HepG2 (cell line): ENCODE measurements at regions of chr21 and their contacts with region 1.

Region 1: GRCh38 chr21:46581780-46582307 is 23.0 kb downstream of the S100B start:
- DNase-seq: peak; percentile 79
- ATAC-seq: peak; percentile 97
- H3K4me3 ChIP-seq: peak overlapping the region in 1 of 3 experiments; percentile 43; a peak in 1 of 6 replicates
- H3K27ac ChIP-seq: peak overlapping the region; percentile 74
- H3K4me1 ChIP-seq: peaks cover 22% of the 10 kb centered on the region
- H3K27me3 ChIP-seq: no peaks in the 10 kb centered on the region
- CTCF ChIP-seq: no peak
- EP300 ChIP-seq: no peak
- POLR2A ChIP-seq: no peak
- RAD21 ChIP-seq: peak; percentile 27; the same call in 1 of the 2 replicates

Region 2: GRCh38 chr21:46442938-46443337 is 138.9 kb before region 1 on chr21:
- CTCF ChIA-PET with region 1: no interaction called
- POLR2A ChIA-PET with region 1: no interaction called
- in situ Hi-C with region 1: no loop called
- intact Hi-C with region 1: no loop called
- DNase-seq: no peak
- ATAC-seq: no peak
- H3K4me3 ChIP-seq: no peak overlapping the region
- H3K27ac ChIP-seq: no peak overlapping the region
- H3K4me1 ChIP-seq: peaks cover 11% of the 10 kb centered on the region
- H3K27me3 ChIP-seq: no peaks in the 10 kb centered on the region
- CTCF ChIP-seq: no peak
- EP300 ChIP-seq: no peak
- POLR2A ChIP-seq: no peak
- RAD21 ChIP-seq: no peak

Region 3: GRCh38 chr21:46569081-46569480 is 12.8 kb before region 1 on chr21:
- CTCF ChIA-PET with region 1: no interaction called
- POLR2A ChIA-PET with region 1: no interaction called
- in situ Hi-C with region 1: no loop called
- intact Hi-C with region 1: no loop called
- DNase-seq: no peak
- ATAC-seq: no peak
- H3K4me3 ChIP-seq: no peak overlapping the region
- H3K27ac ChIP-seq: no peak overlapping the region
- H3K4me1 ChIP-seq: no peaks in the 10 kb centered on the region
- H3K27me3 ChIP-seq: no peaks in the 10 kb centered on the region
- CTCF ChIP-seq: no peak
- EP300 ChIP-seq: no peak
- POLR2A ChIP-seq: no peak
- RAD21 ChIP-seq: no peak

Region 4: DNA sequence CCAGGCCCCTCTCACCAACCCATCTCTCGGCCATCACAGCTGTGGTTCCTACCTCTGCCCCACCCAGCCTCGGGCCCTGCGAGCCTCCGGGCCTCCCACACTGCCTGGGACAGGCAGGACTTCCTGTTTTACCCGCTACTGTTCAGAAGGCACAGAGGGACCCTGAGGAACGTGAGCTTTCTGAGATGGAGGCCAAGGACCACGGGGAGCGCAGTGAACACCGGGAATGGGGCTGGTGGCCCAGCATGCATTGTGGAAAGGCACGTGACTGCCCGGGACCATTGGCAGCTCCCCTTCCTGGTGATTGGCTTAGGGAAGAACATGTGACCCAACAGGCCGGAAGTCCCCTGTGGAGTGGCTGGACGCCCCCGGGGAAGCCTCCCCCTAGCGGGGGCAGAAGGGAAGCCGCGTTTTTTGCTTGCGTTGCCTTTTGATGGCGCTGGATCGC is 16.1 kb after region 1 on chr21:
- CTCF ChIA-PET with region 1: no interaction called
- POLR2A ChIA-PET with region 1: interaction called, 5 read pairs
- in situ Hi-C with region 1: no loop called
- intact Hi-C with region 1: loop called (anchors 2 kb)
- DNase-seq: no peak
- ATAC-seq: no peak
- H3K4me3 ChIP-seq: no peak overlapping the region
- H3K27ac ChIP-seq: no peak overlapping the region
- H3K4me1 ChIP-seq: peaks cover 55% of the 10 kb centered on the region
- H3K27me3 ChIP-seq: peaks cover 0 to 5% of the 10 kb centered on the region in 2 experiments; a peak in 1 of 5 replicates
- CTCF ChIP-seq: no peak
- EP300 ChIP-seq: no peak
- POLR2A ChIP-seq: no peak
- RAD21 ChIP-seq: no peak

Region 5: DNA sequence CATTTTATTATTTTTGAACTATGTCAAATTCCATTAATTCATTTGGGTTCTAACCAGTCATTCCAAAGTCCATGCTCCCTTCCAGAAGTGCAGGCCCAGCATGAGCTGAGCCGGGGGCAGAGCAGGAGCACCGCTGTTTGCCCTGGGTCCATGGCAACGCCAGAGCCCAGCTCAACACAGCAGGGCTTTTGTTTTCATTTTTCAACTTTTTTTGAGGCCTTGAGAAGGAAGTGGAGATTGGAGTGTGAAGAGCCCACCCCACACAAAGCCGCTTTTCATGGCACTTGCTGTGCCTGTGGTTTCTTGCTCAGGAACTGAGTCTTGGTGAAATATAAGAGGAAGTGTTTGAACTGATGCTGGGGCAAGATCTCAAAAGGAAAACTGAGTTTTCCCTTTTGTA is 40.4 kb after region 1 on chr21:
- CTCF ChIA-PET with region 1: no interaction called
- POLR2A ChIA-PET with region 1: interaction called, 10 read pairs
- in situ Hi-C with region 1: no loop called
- intact Hi-C with region 1: no loop called
- DNase-seq: peak; percentile 94
- ATAC-seq: peak; percentile 97
- H3K4me3 ChIP-seq: peak overlapping the region in 1 of 3 experiments; percentile 54; a peak in 1 of 6 replicates
- H3K27ac ChIP-seq: peak overlapping the region; percentile 97
- H3K4me1 ChIP-seq: peaks cover 47% of the 10 kb centered on the region
- H3K27me3 ChIP-seq: no peaks in the 10 kb centered on the region
- CTCF ChIP-seq: no peak
- EP300 ChIP-seq: peak; percentile 63 to 67; a peak in 3 of 4 replicates
- POLR2A ChIP-seq: peak in 1 of 2 experiments; percentile 40; a peak in 1 of 4 replicates
- RAD21 ChIP-seq: no peak